Naive thymus-derived CD4-positive, alpha-beta T cell (primary cell): ENCODE measurements at regions of chr7 and their contacts with region 1.

Region 1: DNA sequence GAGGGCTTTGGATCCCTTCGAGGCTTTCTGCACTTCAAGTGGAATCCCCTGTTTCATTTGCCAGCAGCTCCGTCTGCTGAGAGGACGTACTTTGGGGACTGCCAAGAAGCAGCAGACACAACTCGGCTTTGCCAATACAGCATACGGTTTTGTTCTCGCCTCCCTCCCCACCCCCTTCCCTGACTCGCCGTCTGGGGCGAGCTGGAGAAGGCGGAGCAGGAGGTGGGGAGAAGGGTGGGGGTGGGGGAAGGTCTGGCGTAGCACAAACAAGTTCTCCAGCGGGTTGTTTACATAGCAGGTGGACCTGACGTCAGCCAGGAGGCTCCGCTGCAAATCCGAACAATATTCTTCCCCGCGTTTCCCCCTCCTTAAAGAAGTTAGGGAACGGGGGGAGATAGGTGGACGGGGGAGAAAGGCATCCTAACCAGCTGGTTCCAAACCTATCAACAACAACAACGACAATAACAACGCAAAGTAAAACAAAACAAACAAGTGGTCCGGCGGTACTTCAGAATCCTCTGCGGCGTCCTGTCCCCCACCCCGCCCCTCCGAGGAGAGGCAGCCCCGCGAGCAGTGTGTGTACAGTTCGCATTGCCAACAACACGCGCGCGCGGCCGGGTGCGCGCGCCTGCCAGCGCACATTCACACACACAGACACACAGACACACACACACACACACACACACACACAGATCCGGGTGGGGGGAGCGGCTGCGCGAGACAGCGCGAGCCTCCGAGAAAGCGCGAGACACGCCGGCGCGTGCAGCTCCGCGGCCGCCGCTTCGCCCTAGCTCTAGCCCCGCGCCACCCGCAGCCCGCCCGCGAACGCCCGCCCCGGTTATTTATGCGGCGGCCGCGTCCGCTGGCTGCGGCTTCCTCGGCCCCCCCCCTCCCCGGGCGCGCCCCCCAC is 167.0 kb upstream of the PPP1R3A start:
- DNase-seq: peak in 2 of 9 donors; percentile 4 to 40
- ATAC-seq: peak; percentile 49
- H3K4me3 ChIP-seq: peak overlapping the region; percentile 42
- H3K4me3 Mint-ChIP-seq: peak overlapping the region; percentile 61 to 90 (median 76)
- H3K27ac ChIP-seq: no peak overlapping the region
- H3K27ac Mint-ChIP-seq: peak overlapping the region in 1 of 9 donors; percentile 84
- H3K4me1 ChIP-seq: peaks cover 17 to 21% of the 10 kb centered on the region in 2 donors
- H3K4me1 Mint-ChIP-seq: peaks cover 6 to 53% (median 37%) of the 10 kb centered on the region in 7 donors
- H3K27me3 ChIP-seq: peaks cover 8 to 18% of the 10 kb centered on the region in 2 donors
- H3K27me3 Mint-ChIP-seq: peaks cover 67 to 81% (median 77%) of the 10 kb centered on the region in 5 donors

Region 2: DNA sequence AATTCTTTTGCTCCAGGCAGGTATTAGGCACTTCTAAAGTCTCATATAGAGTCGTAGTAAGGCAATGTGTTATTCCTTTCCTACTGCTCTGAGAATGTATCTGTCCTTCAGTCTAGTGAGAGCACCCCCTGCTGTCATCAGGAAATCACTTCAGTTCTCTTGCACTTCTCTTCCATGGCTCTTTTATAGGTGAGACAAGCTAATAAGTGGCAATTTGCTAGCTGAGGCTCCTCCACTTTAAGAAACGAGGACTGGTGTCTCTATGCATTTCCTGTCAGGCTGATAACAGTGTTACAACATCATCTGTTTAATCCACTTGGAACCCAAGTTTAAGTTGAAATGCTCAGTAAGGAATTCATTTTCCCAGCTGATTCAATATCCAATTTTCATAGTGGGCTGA is 1594.1 kb after region 1 on chr7:
- CTCF ChIA-PET with region 1: no interaction called
- POLR2A ChIA-PET with region 1: no interaction called
- intact Hi-C with region 1: loop called in 1 of 2 experiments (anchors 10 kb)
- DNase-seq: no peak
- ATAC-seq: no peak
- H3K4me3 ChIP-seq: no peak overlapping the region
- H3K4me3 Mint-ChIP-seq: no peak overlapping the region
- H3K27ac ChIP-seq: no peak overlapping the region
- H3K27ac Mint-ChIP-seq: no peak overlapping the region
- H3K4me1 ChIP-seq: no peaks in the 10 kb centered on the region
- H3K4me1 Mint-ChIP-seq: no peaks in the 10 kb centered on the region
- H3K27me3 ChIP-seq: peaks cover 0 to 3% of the 10 kb centered on the region in 2 donors
- H3K27me3 Mint-ChIP-seq: no peaks in the 10 kb centered on the region

Region 3: DNA sequence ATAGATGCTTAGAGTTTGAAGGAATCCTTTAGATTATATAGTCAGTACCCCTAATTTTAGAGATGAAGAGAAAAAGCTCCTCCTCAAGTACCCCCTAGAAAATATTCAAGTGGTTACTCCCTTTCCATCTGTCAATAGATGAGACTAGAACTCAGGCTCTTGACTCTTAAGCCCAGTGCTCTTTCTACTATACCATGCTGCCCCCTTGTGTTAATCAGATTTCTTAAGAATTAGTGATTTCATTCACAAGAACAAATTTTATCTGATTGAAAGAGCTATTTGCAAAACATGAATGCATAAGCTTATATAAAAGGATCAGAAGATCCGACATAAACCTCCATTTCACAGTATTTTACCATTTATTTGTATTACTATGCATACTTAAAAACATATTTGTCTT is 1765.4 kb after region 1 on chr7:
- CTCF ChIA-PET with region 1: no interaction called
- POLR2A ChIA-PET with region 1: no interaction called
- intact Hi-C with region 1: loop called (anchors 1 to 2 kb)
- DNase-seq: peak in 1 of 9 donors; percentile 2
- ATAC-seq: no peak
- H3K4me3 ChIP-seq: no peak overlapping the region
- H3K4me3 Mint-ChIP-seq: no peak overlapping the region
- H3K27ac ChIP-seq: no peak overlapping the region
- H3K27ac Mint-ChIP-seq: no peak overlapping the region
- H3K4me1 ChIP-seq: no peaks in the 10 kb centered on the region
- H3K4me1 Mint-ChIP-seq: no peaks in the 10 kb centered on the region
- H3K27me3 ChIP-seq: no peaks in the 10 kb centered on the region
- H3K27me3 Mint-ChIP-seq: peaks cover 0 to 12% (median 0%) of the 10 kb centered on the region in 5 donors

Region 4: GRCh38 chr7:115910541-115911164 is 1824.8 kb after region 1 on chr7:
- CTCF ChIA-PET with region 1: no interaction called
- POLR2A ChIA-PET with region 1: no interaction called
- intact Hi-C with region 1: loop called (anchors 1 to 2 kb)
- DNase-seq: peak in 2 of 9 donors; percentile 2 to 3
- ATAC-seq: no peak
- H3K4me3 ChIP-seq: no peak overlapping the region
- H3K4me3 Mint-ChIP-seq: no peak overlapping the region
- H3K27ac ChIP-seq: no peak overlapping the region
- H3K27ac Mint-ChIP-seq: no peak overlapping the region
- H3K4me1 ChIP-seq: no peaks in the 10 kb centered on the region
- H3K4me1 Mint-ChIP-seq: no peaks in the 10 kb centered on the region
- H3K27me3 ChIP-seq: no peaks in the 10 kb centered on the region
- H3K27me3 Mint-ChIP-seq: peaks cover 0 to 11% (median 3%) of the 10 kb centered on the region in 5 donors